GM12878 (cell line): ENCODE measurements at regions of chr6 and their contacts with region 1.

Region 1: GRCh38 chr6:79239538-79240168 is 5.2 kb upstream of the HMGN3 start:
- DNase-seq: peak; percentile 55
- ATAC-seq: peak; percentile 84
- H3K4me3 ChIP-seq: peak overlapping the region; percentile 8; the same call in 1 of the 2 replicates
- H3K27ac ChIP-seq: no peak overlapping the region
- H3K4me1 ChIP-seq: peaks cover 26% of the 10 kb centered on the region
- H3K27me3 ChIP-seq: no peaks in the 10 kb centered on the region
- CTCF ChIP-seq: no peak
- EP300 ChIP-seq: peak in 1 of 2 experiments; percentile 91; a peak in 2 of 4 replicates
- POLR2A ChIP-seq: no peak
- RAD21 ChIP-seq: no peak

Region 2: DNA sequence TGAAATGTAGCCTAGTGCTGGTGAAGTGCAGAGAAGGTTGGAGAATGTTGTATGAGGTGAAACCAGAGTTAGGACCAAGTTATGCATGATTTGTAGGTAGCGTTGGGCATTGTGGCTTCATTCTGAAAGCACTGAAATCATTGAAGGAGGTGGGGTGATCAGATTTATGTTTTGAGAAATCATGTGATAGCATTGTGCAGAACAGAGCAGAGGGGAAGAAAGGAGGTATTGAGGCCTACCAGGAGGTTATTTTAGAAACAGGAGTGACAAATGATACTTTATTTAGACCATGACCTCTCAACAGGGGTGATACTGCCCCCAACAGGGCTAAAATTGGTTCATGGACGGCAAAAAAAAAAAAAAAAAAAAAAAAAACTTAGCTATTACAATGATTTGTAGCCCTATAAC is 10.5 kb after region 1 on chr6:
- CTCF ChIA-PET with region 1: interaction called, 7 read pairs
- POLR2A ChIA-PET with region 1: interaction called, 7 read pairs
- RAD21 ChIA-PET with region 1: interaction called, 13 read pairs
- SMC1A ChIA-PET with region 1: interaction called, 20 read pairs
- in situ Hi-C with region 1: no loop called
- intact Hi-C with region 1: no loop called
- DNase-seq: peak; percentile 51
- ATAC-seq: peak; percentile 84
- H3K4me3 ChIP-seq: no peak overlapping the region
- H3K27ac ChIP-seq: no peak overlapping the region
- H3K4me1 ChIP-seq: peaks cover 13% of the 10 kb centered on the region
- H3K27me3 ChIP-seq: no peaks in the 10 kb centered on the region
- CTCF ChIP-seq: peak; percentile 32 to 50 (median 49); a peak in 4 of 6 replicates
- EP300 ChIP-seq: 0 out of 4 replicates have a peak, but pooled peaks of 1 of the 2 experiments have one; percentile 19
- POLR2A ChIP-seq: no peak
- RAD21 ChIP-seq: peak; percentile 63